H1 (cell line): ENCODE measurements at regions of chr14 and their contacts with region 1.

Region 1: GRCh38 chr14:23252420-23253333 is 14.9 kb downstream of the RNF212B start:
- DNase-seq: peak in 1 of 2 experiments; percentile 39
- H3K4me3 ChIP-seq: peak overlapping the region in 3 of 4 experiments; percentile 15 to 46 (median 20); a peak in 6 of 8 replicates
- H3K27ac ChIP-seq: peak overlapping the region; percentile 89
- H3K4me1 ChIP-seq: peaks cover 9 to 22% (median 13%) of the 10 kb centered on the region in 4 experiments; a peak in 5 of 7 replicates
- H3K27me3 ChIP-seq: no peaks in the 10 kb centered on the region
- CTCF ChIP-seq: no peak
- EP300 ChIP-seq: no peak
- POLR2A ChIP-seq: no peak; a peak in 1 of 3 replicates
- RAD21 ChIP-seq: no peak

Region 2: GRCh38 chr14:23095196-23096108 is 157.2 kb before region 1 on chr14 and contains the start of gene C14orf119:
- CTCF ChIA-PET with region 1: no interaction called
- POLR2A ChIA-PET with region 1: interaction called, 12 read pairs
- DNase-seq: peak in 1 of 2 experiments; percentile 96
- H3K4me3 ChIP-seq: peak within 1 kb of the TSS; percentile 92 to 97 (median 96)
- H3K27ac ChIP-seq: peak within 1 kb of the TSS; percentile 99
- H3K4me1 ChIP-seq: no peaks in the 10 kb centered on the region; a peak in 3 of 7 replicates
- H3K27me3 ChIP-seq: no peaks in the 10 kb centered on the region
- CTCF ChIP-seq: no peak
- EP300 ChIP-seq: no peak
- POLR2A ChIP-seq: no peak; a peak in 1 of 3 replicates
- RAD21 ChIP-seq: no peak
- total RNA-seq, gene C14orf119: 78.1 and 91.2 TPM in 2 replicates

Region 3: DNA sequence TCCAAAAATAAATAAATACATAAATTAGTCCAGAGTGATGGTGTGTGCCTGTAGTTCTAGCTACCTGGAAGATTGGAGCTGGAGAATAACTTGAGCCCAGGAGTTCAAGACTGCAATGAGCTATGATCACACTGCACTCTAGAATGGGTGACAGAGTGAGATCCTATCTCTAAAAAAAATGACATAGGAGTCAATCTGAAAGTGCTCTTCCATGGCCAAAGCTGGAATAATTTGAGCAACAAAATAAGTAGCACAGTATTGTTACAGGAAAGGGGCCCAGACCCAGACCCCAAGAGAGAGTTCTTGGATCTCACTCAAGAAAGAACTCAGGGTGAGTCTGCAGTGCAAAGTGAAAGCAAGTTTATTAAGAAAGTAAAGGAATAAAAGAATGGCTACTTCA is 44.4 kb before region 1 on chr14:
- CTCF ChIA-PET with region 1: no interaction called
- POLR2A ChIA-PET with region 1: interaction called, 13 read pairs
- DNase-seq: no peak
- H3K4me3 ChIP-seq: no peak overlapping the region
- H3K27ac ChIP-seq: no peak overlapping the region
- H3K4me1 ChIP-seq: peaks cover 0 to 13% (median 4%) of the 10 kb centered on the region in 4 experiments; a peak in 4 of 7 replicates
- H3K27me3 ChIP-seq: no peaks in the 10 kb centered on the region
- CTCF ChIP-seq: no peak
- EP300 ChIP-seq: no peak
- POLR2A ChIP-seq: no peak
- RAD21 ChIP-seq: no peak

Region 4: DNA sequence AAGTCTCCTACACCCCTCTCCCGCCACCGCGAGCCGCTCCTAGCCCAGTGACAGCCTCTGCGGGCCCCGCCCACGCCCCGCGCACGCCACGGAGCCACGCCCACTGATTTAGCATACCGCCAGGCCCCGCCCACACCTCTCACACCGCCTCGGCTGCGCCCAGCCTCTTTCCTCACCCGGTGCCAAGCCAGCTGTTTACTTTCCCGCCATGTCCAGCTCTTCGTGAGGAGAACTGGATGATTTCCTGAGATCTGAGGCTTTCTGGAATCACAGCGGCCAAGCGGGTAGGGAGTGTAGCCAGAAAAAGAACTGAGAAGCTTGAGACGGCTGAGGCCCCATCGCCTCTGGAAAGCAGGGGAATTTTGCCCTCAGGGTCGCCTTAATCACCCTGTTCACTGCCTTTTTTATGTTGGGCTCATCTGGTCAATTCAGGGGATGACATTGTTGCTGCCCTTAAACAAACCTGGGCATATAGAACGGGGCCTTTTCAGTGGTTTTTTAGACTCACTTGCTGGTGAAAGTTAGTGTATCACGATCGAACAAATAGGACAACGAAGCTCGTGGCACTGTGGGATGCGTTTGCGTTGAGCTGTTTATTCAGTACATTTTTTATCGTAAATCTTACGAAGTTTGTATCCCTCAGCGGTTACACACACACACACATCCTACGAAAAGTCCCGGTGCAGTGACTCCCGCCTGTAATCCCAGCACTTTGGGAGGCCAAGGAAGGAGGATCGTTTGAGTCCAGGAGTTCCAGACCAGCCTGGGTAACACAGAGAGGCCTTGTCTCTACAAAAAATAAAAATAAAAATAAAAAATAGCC is 14.7 kb before region 1 on chr14 and contains the start of gene RNF212B:
- CTCF ChIA-PET with region 1: interaction called, 5 read pairs
- POLR2A ChIA-PET with region 1: interaction called, 19 read pairs
- DNase-seq: peak; percentile 64 to 99
- H3K4me3 ChIP-seq: peak within 1 kb of the TSS; percentile 20 to 54 (median 34); a peak in 7 of 8 replicates
- H3K27ac ChIP-seq: no peak within 1 kb of the TSS
- H3K4me1 ChIP-seq: no peaks in the 10 kb centered on the region; a peak in 1 of 7 replicates
- H3K27me3 ChIP-seq: no peaks in the 10 kb centered on the region
- CTCF ChIP-seq: no peak
- EP300 ChIP-seq: no peak
- POLR2A ChIP-seq: peak in 1 of 2 experiments; percentile 59; a peak in 1 of 3 replicates
- RAD21 ChIP-seq: peak in 1 of 2 experiments; percentile 29; a peak in 2 of 4 replicates
- total RNA-seq, gene RNF212B: 1.2 TPM in 1 of 2 replicates, not detected in the other